ENCODE measurements at regions of chr22 and their contacts with region 1.

Region 1: DNA sequence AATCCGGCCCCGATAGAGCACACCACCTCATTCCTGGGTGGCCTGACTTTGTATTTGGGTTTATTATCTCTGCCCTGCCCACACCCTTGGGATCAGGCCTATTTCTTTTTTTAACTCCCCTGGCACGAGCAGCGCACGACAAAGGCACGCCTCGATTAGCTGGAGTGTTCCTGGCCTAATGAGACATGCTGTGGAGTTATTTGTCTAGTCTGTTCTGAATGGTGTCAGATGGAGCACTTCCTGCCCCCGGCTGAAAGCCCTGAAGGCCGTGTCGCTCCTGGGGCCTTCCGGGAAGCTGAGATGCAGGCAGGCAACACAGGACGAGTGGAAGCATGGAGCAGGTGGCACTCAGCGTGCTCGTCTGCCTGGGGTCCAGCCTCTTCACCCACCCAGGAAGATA is 47.1 kb downstream of the LARGE1 start:
- DNase-seq: peak; percentile 48 to 72
- ATAC-seq: peak; percentile 69 to 94 (median 84)
- H3K4me3 ChIP-seq: peak overlapping the region in 3 of 10 donors; percentile 15 to 21 (median 19)
- H3K27ac ChIP-seq: peak overlapping the region in 9 of 10 donors; percentile 57 to 88 (median 73)
- H3K4me1 ChIP-seq: peaks cover 21 to 82% (median 49%) of the 10 kb centered on the region in 9 donors
- H3K27me3 ChIP-seq: no peaks in the 10 kb centered on the region
- CTCF ChIP-seq: no peak

Region 2: DNA sequence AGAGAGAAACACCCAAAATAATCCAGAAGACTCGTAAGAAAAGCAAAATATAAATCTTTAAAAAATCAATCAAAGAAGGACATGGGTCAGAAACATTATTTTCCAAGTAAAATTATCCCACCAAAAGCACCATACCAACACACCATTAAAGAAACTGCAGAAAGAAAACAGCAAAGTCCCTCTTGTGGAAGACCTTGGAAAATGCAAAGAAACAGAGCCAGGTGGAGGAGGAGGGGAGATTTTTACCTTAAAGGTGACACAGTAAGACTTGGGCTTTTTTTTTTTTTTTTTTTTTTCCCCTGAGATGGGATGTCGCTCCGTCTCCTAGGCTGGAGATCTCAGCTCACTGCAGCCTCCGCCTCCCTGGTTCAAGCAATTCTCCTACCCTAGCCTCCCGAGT is 76.7 kb before region 1 on chr22:
- intact Hi-C with region 1: no loop called
- DNase-seq: no peak
- ATAC-seq: no peak
- H3K4me3 ChIP-seq: no peak overlapping the region
- H3K27ac ChIP-seq: no peak overlapping the region
- H3K4me1 ChIP-seq: peaks cover 0 to 33% (median 14%) of the 10 kb centered on the region in 9 donors
- H3K27me3 ChIP-seq: no peaks in the 10 kb centered on the region
- CTCF ChIP-seq: no peak

Region 3: GRCh38 chr22:33909075-33909458 is 35.9 kb after region 1 on chr22:
- intact Hi-C with region 1: loop called in 2 of 10 experiments (anchors 5 kb)
- DNase-seq: peak in 1 of 2 donors; percentile 35
- ATAC-seq: peak; percentile 17 to 77 (median 64)
- H3K4me3 ChIP-seq: peak overlapping the region in 1 of 10 donors; percentile 6
- H3K27ac ChIP-seq: peak overlapping the region; percentile 18 to 85 (median 64)
- H3K4me1 ChIP-seq: peaks cover 0 to 54% (median 30%) of the 10 kb centered on the region in 9 donors
- H3K27me3 ChIP-seq: no peaks in the 10 kb centered on the region
- CTCF ChIP-seq: no peak

Measured in heart right ventricle (tissue), 16 donors.